ENCODE measurements at regions of chr14 and their contacts with region 1.

Region 1: GRCh38 chr14:35215110-35215876 is 76.9 kb upstream of the PSMA6 start:
- DNase-seq: peak; percentile 57
- ATAC-seq: no peak; the same call in 2 of the 3 replicates
- H3K4me3 ChIP-seq: no peak overlapping the region
- H3K27ac ChIP-seq: no peak overlapping the region
- H3K4me1 ChIP-seq: peaks cover 25% of the 10 kb centered on the region
- H3K27me3 ChIP-seq: no peaks in the 10 kb centered on the region
- CTCF ChIP-seq: peak; percentile 68
- EP300 ChIP-seq: no peak
- POLR2A ChIP-seq: no peak
- RAD21 ChIP-seq: peak; percentile 46; the same call in 1 of the 2 replicates

Region 2: GRCh38 chr14:35146711-35147149 is 68.6 kb before region 1 on chr14:
- CTCF ChIA-PET with region 1: no interaction called
- POLR2A ChIA-PET with region 1: no interaction called
- in situ Hi-C with region 1: no loop called
- intact Hi-C with region 1: loop called (anchors 1 kb)
- DNase-seq: peak; percentile 72
- ATAC-seq: peak; percentile 84
- H3K4me3 ChIP-seq: no peak overlapping the region
- H3K27ac ChIP-seq: peak overlapping the region; percentile 3
- H3K4me1 ChIP-seq: peaks cover 33% of the 10 kb centered on the region
- H3K27me3 ChIP-seq: no peaks in the 10 kb centered on the region
- CTCF ChIP-seq: no peak
- EP300 ChIP-seq: no peak
- POLR2A ChIP-seq: no peak
- RAD21 ChIP-seq: no peak